Mammary epithelial cell (primary cell): ENCODE measurements at regions of chr10 and their contacts with region 1.

Region 1: DNA sequence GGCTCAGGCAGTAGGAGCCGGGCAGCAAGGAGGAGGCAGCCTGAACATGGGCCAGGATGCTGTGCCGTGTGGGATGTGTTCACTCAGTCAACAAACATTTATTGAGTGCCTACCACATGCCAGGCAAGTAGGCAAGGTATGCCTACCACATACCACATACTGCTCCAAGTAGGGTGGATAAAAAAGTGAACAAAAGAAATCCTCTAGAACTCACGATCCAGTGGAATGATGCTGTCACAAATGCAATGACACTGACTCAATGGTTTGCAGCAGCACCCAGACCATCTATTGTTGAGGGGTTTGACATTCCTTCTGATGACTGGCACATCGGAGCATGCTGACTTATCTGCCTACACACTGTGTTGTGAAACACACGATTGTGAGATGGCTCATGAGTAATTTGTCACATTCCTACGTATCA is 413.5 kb downstream of the NRG3 start:
- DNase-seq: peak; percentile 90
- H3K4me3 ChIP-seq: no peak overlapping the region
- H3K27ac ChIP-seq: peak overlapping the region; percentile 38
- H3K4me1 ChIP-seq: peaks cover 18% of the 10 kb centered on the region
- H3K27me3 ChIP-seq: no peaks in the 10 kb centered on the region
- CTCF ChIP-seq: no peak

Region 2: GRCh38 chr10:82190432-82191251 is 97.8 kb before region 1 on chr10:
- CTCF ChIA-PET with region 1: no interaction called
- dilution Hi-C with region 1: no loop called
- in situ Hi-C with region 1: no loop called
- intact Hi-C with region 1: no loop called
- DNase-seq: no peak
- H3K4me3 ChIP-seq: peak overlapping the region in 1 of 3 experiments; percentile 16
- H3K27ac ChIP-seq: no peak overlapping the region
- H3K4me1 ChIP-seq: no peaks in the 10 kb centered on the region
- H3K27me3 ChIP-seq: no peaks in the 10 kb centered on the region
- CTCF ChIP-seq: no peak

Region 3: DNA sequence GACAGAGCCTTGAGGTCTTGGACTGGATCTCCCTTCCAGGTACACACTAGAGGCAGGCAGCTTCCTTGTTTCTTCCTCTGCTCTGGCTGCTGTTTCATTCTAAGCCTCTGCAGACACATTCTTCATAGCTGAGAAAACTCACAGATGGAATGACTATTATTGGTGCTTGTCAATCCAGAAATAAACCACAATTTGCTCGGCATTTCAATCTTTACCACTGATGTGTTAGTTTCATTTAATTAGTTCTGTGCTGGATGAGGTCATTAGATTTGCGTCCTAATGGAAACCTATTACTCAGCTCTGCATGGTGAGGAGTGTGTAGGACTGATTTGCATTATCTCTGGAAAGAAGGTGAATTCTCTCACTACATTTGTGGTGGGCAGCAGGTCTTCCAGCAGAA is 21.0 kb before region 1 on chr10:
- CTCF ChIA-PET with region 1: no interaction called
- dilution Hi-C with region 1: no loop called
- in situ Hi-C with region 1: no loop called
- intact Hi-C with region 1: loop called (anchors 1 kb)
- DNase-seq: peak; percentile 57
- H3K4me3 ChIP-seq: no peak overlapping the region
- H3K27ac ChIP-seq: peak overlapping the region; percentile 71
- H3K4me1 ChIP-seq: peaks cover 33% of the 10 kb centered on the region
- H3K27me3 ChIP-seq: no peaks in the 10 kb centered on the region
- CTCF ChIP-seq: no peak